PC-9 (cell line): ENCODE measurements at regions of chr10 and their contacts with region 1.

Region 1: DNA sequence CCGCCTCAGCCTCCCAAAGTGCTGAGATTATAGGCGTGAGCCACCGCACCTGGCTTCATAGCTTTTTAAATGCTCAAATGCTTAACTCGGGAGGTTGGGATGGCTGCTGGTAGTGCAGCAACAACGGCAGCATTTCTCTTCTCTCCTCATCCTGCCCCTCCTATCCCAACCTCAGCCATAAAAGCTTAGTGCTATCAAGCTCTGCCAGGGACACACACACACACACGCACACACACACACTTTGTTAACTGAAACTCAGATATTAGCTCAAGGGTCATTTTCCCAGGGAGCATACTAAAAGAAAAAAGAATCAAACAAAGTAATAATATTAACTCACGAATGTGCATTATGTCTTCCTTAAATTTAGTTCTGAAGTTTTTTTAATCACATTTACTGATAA is 63.0 kb upstream of the HPS1 start:
- DNase-seq: no peak
- H3K4me3 ChIP-seq: no peak overlapping the region
- H3K27ac ChIP-seq: no peak overlapping the region
- H3K4me1 ChIP-seq: no peaks in the 10 kb centered on the region
- H3K27me3 ChIP-seq: peaks cover 23% of the 10 kb centered on the region
- CTCF ChIP-seq: no peak

Region 2: DNA sequence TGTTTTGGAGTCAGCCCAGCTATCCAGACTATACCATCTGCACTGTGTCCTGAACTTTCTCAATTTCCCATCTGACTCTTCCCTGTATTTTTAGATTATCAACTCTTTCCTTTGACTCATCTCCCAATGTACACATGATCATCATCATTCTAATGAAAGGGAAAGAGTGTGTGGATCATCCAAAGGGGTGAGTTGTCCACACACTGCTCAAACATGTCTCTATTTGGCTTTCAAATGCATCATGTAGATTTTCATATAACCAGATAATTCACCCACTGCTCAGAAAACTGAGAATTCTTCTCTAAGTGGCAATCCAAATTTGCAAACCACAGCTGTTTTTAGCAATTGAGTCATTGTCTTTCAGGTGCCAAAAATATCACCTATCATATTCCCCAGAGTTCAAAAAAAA is 127.2 kb after region 1 on chr10:
- CTCF ChIA-PET with region 1: no interaction called
- POLR2A ChIA-PET with region 1: interaction called, 10 read pairs
- intact Hi-C with region 1: no loop called
- DNase-seq: no peak
- H3K4me3 ChIP-seq: no peak overlapping the region
- H3K27ac ChIP-seq: no peak overlapping the region
- H3K4me1 ChIP-seq: no peaks in the 10 kb centered on the region
- H3K27me3 ChIP-seq: no peaks in the 10 kb centered on the region; the same call in 1 of the 2 replicates
- CTCF ChIP-seq: no peak